Activated CD8-positive, alpha-beta T cell treated with anti-CD3 and anti-CD28 coated beads, Interleukin-2, amount 10 ng/mL, durations not matched to agents 7 days and 5 days (primary cell): ENCODE measurements at regions of chr13 and their contacts with region 1.

Region 1: GRCh38 chr13:46321494-46322225 is 65.4 kb downstream of the RUBCNL start:
- DNase-seq: peak; percentile 86
- ATAC-seq: peak; percentile 88
- H3K4me3 Mint-ChIP-seq: peak overlapping the region; percentile 70
- H3K27ac Mint-ChIP-seq: peak overlapping the region; percentile 84
- H3K4me1 Mint-ChIP-seq: peaks cover 18% of the 10 kb centered on the region
- H3K27me3 Mint-ChIP-seq: peaks cover 2% of the 10 kb centered on the region

Region 2: GRCh38 chr13:45623515-45624090 is 698.1 kb before region 1 on chr13:
- CTCF ChIA-PET with region 1: interaction called, 10 read pairs
- POLR2A ChIA-PET with region 1: no interaction called
- DNase-seq: no peak
- ATAC-seq: no peak
- H3K4me3 Mint-ChIP-seq: no peak overlapping the region
- H3K27ac Mint-ChIP-seq: no peak overlapping the region
- H3K4me1 Mint-ChIP-seq: no peaks in the 10 kb centered on the region
- H3K27me3 Mint-ChIP-seq: peaks cover 35% of the 10 kb centered on the region

Region 3: GRCh38 chr13:46004491-46004890 is 317.2 kb before region 1 on chr13:
- CTCF ChIA-PET with region 1: no interaction called
- POLR2A ChIA-PET with region 1: no interaction called
- DNase-seq: no peak
- ATAC-seq: no peak
- H3K4me3 Mint-ChIP-seq: no peak overlapping the region
- H3K27ac Mint-ChIP-seq: no peak overlapping the region
- H3K4me1 Mint-ChIP-seq: peaks cover 4% of the 10 kb centered on the region
- H3K27me3 Mint-ChIP-seq: no peaks in the 10 kb centered on the region

Region 4: DNA sequence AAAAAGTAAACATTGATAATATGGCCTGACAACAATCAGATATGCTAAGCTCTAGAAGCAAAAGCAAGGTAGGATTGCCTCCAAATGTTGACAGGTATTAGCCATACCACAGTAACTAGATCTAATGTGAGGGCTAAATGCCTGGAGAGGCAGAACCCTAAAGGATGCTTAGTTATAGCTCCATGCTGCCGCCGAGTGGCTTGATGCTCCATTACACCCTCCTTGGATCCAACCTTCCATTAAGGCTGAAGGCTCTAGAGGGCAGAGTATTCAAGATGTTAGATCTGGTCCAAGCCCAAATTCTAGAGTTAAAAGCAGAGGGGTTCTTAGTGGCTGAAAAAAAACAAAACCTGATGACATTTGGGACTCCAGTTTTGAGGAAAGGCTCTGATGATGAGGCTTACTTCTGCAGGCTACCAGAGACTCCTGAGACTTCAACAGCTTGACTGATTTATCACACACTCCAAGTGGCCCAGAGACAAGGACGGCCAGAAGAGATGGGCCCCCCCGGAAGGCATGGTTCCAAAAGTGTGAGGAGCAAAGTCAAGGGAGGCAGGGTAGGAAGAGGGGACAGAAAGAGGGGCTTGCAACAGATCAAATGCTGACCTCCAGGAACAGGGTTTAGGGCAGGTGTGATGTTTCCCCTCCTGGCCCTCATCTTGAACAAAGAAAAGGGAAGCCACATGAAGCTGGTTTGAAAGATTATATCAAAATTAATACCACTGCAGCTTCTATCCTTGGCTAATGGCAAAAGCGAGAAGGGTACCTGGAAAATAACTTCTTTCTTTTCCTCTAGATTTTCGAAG is 194.9 kb before region 1 on chr13:
- CTCF ChIA-PET with region 1: interaction called, 16 read pairs
- POLR2A ChIA-PET with region 1: no interaction called
- DNase-seq: peak; percentile 78
- ATAC-seq: peak; percentile 77
- H3K4me3 Mint-ChIP-seq: no peak overlapping the region
- H3K27ac Mint-ChIP-seq: peak overlapping the region; percentile 56
- H3K4me1 Mint-ChIP-seq: peaks cover 35% of the 10 kb centered on the region
- H3K27me3 Mint-ChIP-seq: no peaks in the 10 kb centered on the region

Region 5: GRCh38 chr13:46160471-46161066 is 161.1 kb before region 1 on chr13:
- CTCF ChIA-PET with region 1: interaction called, 41 read pairs
- POLR2A ChIA-PET with region 1: interaction called, 4 read pairs
- DNase-seq: peak; percentile 64
- ATAC-seq: peak; percentile 53
- H3K4me3 Mint-ChIP-seq: peak overlapping the region; percentile 71
- H3K27ac Mint-ChIP-seq: peak overlapping the region; percentile 91
- H3K4me1 Mint-ChIP-seq: peaks cover 63% of the 10 kb centered on the region
- H3K27me3 Mint-ChIP-seq: no peaks in the 10 kb centered on the region

Region 6: DNA sequence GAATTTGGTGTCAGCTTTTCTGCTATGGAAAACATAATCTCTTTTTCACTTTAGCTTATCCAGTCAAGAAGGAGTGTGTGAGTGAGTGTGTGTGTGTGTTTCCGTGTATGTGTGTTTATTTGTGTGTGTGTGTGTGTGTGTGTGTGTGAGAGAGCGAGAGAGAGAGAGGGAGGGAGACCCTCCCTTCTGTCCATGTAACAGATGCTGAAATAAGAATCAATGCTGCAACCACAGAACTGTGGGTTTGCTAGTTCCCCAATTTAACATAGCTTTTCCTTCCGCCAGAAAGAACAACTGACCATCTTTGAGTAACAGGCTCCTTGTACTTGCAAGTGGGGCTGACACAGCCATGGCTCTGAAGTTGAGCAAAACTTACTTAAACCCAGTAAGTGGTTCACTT is 144.9 kb before region 1 on chr13:
- CTCF ChIA-PET with region 1: interaction called, 19 read pairs
- POLR2A ChIA-PET with region 1: interaction called, 3 read pairs
- DNase-seq: peak; percentile 56
- ATAC-seq: no peak
- H3K4me3 Mint-ChIP-seq: peak overlapping the region; percentile 90
- H3K27ac Mint-ChIP-seq: peak overlapping the region; percentile 83
- H3K4me1 Mint-ChIP-seq: peaks cover 54% of the 10 kb centered on the region
- H3K27me3 Mint-ChIP-seq: no peaks in the 10 kb centered on the region

Region 7: DNA sequence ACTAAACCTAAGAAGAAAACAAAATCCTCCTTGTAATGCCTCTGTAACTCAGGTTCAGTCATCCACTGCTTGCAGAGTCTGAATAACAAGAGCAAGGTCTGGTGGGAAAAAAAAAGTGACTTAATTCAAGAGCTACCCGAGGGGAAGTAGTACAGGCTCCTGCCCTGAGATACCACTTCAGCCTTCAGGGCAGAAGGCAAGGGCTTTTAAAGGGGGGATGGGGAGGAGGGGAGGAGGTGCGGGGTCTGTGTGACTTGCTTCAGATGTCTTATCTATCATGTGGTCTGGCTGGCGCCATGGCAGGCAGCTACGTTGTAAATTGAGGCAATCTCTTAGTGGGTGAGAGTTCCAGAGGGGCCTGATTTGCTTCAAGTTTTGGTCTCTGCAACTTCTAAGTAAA is 43.2 kb before region 1 on chr13:
- CTCF ChIA-PET with region 1: interaction called, 10 read pairs
- POLR2A ChIA-PET with region 1: no interaction called
- DNase-seq: no peak
- ATAC-seq: no peak
- H3K4me3 Mint-ChIP-seq: no peak overlapping the region
- H3K27ac Mint-ChIP-seq: no peak overlapping the region
- H3K4me1 Mint-ChIP-seq: peaks cover 6% of the 10 kb centered on the region
- H3K27me3 Mint-ChIP-seq: no peaks in the 10 kb centered on the region

Region 8: GRCh38 chr13:46295491-46296114 is 26.1 kb before region 1 on chr13:
- CTCF ChIA-PET with region 1: interaction called, 160 read pairs
- POLR2A ChIA-PET with region 1: interaction called, 15 read pairs
- DNase-seq: peak; percentile 83
- ATAC-seq: peak; percentile 92
- H3K4me3 Mint-ChIP-seq: peak overlapping the region; percentile 68
- H3K27ac Mint-ChIP-seq: peak overlapping the region; percentile 98
- H3K4me1 Mint-ChIP-seq: peaks cover 46% of the 10 kb centered on the region
- H3K27me3 Mint-ChIP-seq: no peaks in the 10 kb centered on the region